ENCODE measurements at regions of chr1 and their contacts with region 1.

Region 1: DNA sequence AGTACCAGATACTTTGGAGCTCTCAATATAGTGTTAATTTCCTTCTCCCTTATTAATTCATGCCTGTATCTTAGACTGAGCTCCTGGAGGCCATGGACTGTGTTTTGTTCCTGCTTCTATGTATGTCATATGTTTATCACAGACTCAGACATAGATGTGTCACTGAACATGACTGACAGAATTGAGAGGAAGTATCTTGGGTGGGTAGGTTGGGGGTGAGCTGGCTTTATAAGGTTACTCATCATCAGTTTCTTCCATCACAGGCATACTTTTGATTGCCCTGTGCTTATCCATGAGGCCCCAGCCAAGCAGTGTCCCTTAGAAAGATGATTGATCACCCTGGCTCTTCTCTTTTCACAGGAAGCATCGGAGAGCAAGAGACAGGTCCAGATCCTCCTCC is 5.6 kb upstream of the SH3D21 start:
- DNase-seq: peak; percentile 76
- ATAC-seq: peak; percentile 29
- H3K4me3 ChIP-seq: peak overlapping the region; percentile 19; the same call in 1 of the 2 replicates
- H3K27ac ChIP-seq: peak overlapping the region; percentile 86
- H3K4me1 ChIP-seq: peaks cover 33% of the 10 kb centered on the region
- H3K27me3 ChIP-seq: no peaks in the 10 kb centered on the region
- CTCF ChIP-seq: no peak

Region 2: DNA sequence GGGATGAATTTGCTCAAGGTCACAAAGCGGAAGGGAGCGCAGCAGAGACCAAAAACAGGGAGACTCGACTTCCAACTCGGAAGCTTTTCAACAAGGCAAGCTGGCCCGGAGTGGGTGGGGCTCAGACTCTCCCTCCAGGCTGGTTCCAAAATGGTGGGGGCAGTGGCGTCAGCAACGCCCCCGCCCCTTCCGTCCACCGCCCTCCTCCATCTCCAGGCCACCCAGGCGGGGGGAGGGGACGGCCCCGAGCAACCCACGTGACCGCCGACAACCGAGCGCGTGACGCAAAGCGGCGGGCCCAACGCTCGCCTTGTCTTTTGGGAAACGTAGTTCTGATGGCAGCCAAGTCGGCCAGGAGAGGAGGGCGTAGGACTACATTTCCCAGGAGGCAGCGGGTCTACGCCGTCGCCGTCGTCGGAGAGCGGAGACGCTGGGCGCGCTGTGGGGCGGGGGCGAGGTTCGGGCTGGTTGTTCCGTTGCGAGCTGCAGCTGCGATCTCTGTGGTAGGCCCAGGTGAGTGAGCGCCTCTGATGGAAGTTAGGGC is 76.5 kb before region 1 on chr1 and contains the start of gene THRAP3:
- CTCF ChIA-PET with region 1: interaction called, 3 read pairs
- POLR2A ChIA-PET with region 1: interaction called, 6 read pairs
- intact Hi-C with region 1: loop called (anchors 2 kb)
- DNase-seq: peak; percentile 99
- ATAC-seq: peak; percentile 96
- H3K4me3 ChIP-seq: peak within 1 kb of the TSS; percentile 100
- H3K27ac ChIP-seq: peak within 1 kb of the TSS; percentile 93
- H3K4me1 ChIP-seq: peaks cover 15% of the 10 kb centered on the region
- H3K27me3 ChIP-seq: no peaks in the 10 kb centered on the region
- CTCF ChIP-seq: no peak
- total RNA-seq, gene THRAP3: 55.7 and 67.0 TPM in 2 replicates

Region 3: DNA sequence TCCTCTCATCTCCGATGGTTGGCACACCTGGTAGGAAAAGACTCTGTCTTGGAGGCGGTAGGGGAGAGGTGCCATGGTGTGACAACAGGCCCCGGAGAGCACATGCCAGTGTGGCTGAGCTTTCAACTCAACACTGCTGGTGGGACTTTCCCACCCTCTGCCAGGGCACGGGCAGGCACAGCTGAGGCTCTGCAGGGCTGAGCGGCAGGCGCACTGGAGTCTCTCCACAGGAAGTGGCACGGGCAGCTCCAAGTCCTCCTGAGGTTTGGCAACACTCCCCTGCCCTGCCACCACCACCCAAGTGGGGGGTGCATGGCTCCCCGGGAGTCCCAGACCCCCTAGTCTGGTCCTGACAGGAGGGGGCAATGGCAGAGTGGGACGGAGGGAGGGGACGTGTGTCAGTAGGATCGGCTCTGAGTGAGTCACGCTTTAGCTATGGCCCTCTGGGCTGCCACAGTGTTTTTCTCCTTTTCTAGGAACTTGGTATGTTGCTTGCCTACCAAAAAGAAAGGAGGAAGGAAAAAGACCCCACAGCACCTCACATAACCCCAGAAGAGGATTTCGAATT is 50.2 kb after region 1 on chr1:
- CTCF ChIA-PET with region 1: interaction called, 11 read pairs
- POLR2A ChIA-PET with region 1: no interaction called
- intact Hi-C with region 1: no loop called
- DNase-seq: peak; percentile 85
- ATAC-seq: peak; percentile 69
- H3K4me3 ChIP-seq: no peak overlapping the region; the same call in 1 of the 2 replicates
- H3K27ac ChIP-seq: peak overlapping the region; percentile 92
- H3K4me1 ChIP-seq: peaks cover 49% of the 10 kb centered on the region
- H3K27me3 ChIP-seq: no peaks in the 10 kb centered on the region
- CTCF ChIP-seq: no peak

Region 4: DNA sequence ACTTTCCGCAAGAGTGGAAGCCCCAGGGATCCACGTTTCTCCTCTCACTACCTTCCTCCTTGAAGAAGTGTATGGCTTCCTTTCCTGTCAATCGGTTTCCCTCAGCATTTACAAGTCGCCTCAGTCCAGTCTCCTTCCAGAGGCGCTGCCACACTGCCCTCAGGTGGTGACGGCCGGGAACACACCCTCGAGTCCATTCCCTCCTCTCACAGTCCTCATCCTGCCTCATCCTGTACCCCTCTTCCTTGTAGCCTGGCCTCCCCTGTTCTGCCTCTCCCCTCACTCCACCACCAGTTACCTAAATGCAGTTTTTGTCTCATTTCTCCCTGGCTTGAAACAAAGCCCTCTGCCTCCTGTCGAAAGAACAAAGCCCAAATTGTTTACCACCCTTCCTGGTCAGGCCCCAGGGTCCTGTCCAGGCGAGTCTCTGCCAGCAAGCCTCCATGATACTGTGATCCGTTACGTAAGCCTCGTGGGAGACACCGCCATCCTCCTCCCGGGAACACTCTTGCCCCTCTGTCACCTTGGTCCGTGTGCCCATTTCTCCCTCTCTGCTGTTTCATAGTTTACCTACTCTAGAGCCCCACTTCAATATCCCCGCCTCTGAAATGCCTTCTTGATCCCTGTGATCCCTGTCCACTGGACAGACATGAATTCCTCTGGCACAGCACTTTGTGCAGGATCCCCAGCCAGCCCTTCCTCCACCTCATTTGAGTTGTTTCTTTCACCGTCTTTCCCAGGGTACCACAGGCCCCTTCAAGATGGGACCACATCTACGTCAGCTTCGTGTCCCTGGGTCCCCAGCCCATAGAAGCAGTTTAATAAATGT is 120.5 kb after region 1 on chr1:
- CTCF ChIA-PET with region 1: no interaction called
- POLR2A ChIA-PET with region 1: no interaction called
- intact Hi-C with region 1: loop called (anchors 2 kb)
- DNase-seq: peak; percentile 95
- ATAC-seq: peak; percentile 92
- H3K4me3 ChIP-seq: no peak overlapping the region
- H3K27ac ChIP-seq: no peak overlapping the region
- H3K4me1 ChIP-seq: peaks cover 20% of the 10 kb centered on the region
- H3K27me3 ChIP-seq: no peaks in the 10 kb centered on the region
- CTCF ChIP-seq: peak; percentile 94

Measured in PC-3 (cell line).